ENCODE measurements at regions of chr7 and their contacts with region 1.

Region 1: DNA sequence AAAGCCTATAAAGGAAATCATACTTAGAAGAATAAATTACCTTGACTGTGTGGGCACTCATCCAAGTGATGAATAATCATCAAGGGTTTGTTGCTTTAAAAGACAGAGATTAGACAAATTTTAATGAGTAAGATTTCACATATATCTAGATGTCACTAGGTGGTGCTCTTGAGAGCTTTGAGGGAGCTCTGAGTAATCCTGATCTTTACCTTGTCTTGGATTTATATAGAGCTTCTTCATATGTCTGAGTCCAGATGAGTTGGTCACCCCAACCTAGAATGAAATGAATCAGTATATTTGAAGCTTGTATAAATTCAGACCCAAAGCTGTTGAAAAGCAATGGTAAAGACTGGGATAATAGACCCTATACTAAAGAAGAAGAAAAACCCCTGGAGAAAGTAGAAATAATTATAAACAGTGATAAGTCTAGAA is 3.7 kb downstream of the AGR2 start:
- DNase-seq: no peak
- ATAC-seq: peak; percentile 56
- H3K4me3 Mint-ChIP-seq: no peak overlapping the region
- H3K27ac Mint-ChIP-seq: no peak overlapping the region
- H3K4me1 Mint-ChIP-seq: peaks cover 4% of the 10 kb centered on the region
- H3K27me3 Mint-ChIP-seq: no peaks in the 10 kb centered on the region
- CTCF ChIP-seq: no peak

Region 2: DNA sequence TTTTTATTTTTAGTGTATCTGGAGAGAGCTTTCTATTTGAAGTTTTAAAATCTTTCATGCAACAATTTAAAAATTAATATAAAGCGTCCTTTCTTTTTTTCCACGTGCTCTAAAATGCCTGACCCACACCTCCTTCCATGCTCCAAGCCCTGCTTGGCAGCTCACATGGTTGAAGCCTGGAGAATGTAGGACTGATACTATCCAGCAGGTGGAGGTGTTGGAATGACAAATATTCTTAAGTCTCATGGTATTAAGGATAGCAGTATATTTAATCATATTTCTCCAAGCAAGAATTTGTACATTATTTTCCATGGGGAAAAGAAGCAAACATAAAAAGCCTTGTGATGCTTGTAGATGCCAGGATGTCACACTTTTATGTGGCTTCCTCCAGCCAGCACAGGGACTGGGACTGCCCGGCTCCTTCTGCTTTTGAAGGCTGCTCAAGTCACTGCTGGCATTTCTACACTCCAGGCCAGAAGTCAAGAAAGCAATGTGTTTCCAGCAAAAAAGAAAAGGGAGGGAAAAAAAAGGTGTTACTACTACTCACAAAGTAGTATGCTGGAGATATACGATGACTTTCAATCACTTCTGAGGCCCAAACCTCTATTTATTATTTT is 105.4 kb before region 1 on chr7:
- CTCF ChIA-PET with region 1: interaction called, 3 read pairs
- POLR2A ChIA-PET with region 1: no interaction called
- intact Hi-C with region 1: loop called (anchors 2 kb)
- DNase-seq: no peak
- ATAC-seq: peak; percentile 49
- H3K4me3 Mint-ChIP-seq: no peak overlapping the region
- H3K27ac Mint-ChIP-seq: no peak overlapping the region
- H3K4me1 Mint-ChIP-seq: no peaks in the 10 kb centered on the region
- H3K27me3 Mint-ChIP-seq: no peaks in the 10 kb centered on the region
- CTCF ChIP-seq: no peak

Region 3: DNA sequence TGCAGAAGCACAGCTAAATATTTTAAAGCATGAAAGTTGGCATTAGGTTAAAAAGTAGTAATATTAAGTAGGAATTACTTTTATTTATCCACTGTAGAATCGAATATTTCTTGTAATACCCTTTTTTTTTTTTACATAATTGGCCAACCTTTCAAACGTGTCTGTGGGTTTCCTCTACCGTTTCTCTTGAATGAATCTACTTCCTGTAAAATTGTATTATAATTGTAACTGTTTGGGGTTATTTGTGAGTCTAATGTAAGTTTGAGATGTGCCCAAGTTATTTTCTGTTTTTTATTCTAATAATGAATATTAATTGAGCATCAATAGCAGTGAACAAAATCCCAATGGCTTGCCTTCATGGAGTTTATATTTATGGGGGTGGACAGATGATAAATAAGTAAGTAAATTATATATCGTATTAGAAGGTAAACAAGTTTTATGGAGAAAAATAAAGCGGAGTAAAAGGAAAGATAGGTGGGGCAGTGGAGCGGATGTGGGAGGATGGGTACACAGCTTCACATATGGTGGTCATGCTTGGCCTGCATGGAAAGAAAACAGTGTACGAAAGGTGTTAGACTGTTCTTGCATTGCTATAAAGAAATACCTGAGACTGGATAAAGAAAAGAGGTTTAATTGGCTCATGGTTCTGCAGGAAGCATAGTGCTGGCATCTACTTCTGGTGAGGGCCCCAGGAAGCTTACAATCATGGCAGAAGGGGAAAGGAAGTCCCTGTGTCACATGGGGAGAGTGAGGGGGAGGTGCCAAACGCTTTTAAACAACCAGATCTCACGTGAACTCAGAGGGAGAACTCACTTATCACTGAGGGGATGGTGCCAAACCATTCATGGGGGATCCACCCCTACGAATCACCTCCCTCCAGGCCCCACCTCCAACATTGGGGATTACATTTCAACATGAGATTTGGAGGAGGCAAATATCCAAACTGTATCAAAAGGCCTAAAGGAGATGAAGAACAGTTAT is 42.2 kb before region 1 on chr7:
- CTCF ChIA-PET with region 1: interaction called, 5 read pairs
- POLR2A ChIA-PET with region 1: interaction called, 5 read pairs
- intact Hi-C with region 1: loop called (anchors 2 kb)
- DNase-seq: no peak
- ATAC-seq: peak; percentile 40
- H3K4me3 Mint-ChIP-seq: peak overlapping the region; percentile 75
- H3K27ac Mint-ChIP-seq: peak overlapping the region; percentile 92
- H3K4me1 Mint-ChIP-seq: peaks cover 93% of the 10 kb centered on the region
- H3K27me3 Mint-ChIP-seq: no peaks in the 10 kb centered on the region
- CTCF ChIP-seq: no peak

Region 4: DNA sequence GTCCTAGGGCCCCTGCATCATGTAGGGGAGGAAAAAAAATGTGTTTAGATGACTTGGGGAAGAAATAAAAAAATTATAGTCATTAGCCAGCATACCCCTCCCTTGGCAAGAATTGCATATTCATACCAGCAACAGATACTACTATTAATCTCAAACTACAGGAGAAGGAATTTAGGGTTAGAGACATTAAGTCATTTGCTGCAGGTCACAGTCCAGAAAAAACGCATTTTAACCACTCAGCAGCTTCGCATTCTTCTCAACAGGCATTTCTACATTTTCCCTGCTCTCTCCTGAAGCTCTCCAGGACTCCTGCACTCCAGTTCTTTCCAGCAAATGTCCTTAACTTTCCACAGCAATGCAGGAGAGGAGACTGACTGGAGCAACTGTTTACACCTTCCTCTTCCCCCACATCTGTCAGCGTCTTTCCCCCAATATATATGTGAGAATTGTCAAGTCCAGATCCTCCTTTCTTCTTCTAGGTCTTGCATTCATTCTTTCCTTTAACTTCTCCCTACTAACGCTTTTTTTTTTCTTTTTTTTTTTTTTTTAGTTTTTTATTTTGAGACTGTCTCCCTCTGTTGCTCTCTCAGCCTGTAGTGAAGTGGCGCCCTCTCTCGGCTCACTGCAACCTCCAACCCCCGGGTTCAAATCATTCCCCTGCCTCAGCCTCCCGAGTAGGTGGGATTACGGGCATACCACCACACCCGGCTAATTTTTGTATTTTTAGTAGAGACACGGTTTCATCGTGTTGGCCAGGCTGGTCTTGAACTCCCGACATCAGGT is 1190.9 kb after region 1 on chr7:
- CTCF ChIA-PET with region 1: no interaction called
- POLR2A ChIA-PET with region 1: no interaction called
- intact Hi-C with region 1: no loop called
- DNase-seq: no peak
- ATAC-seq: no peak
- H3K4me3 Mint-ChIP-seq: no peak overlapping the region
- H3K27ac Mint-ChIP-seq: no peak overlapping the region
- H3K4me1 Mint-ChIP-seq: no peaks in the 10 kb centered on the region
- H3K27me3 Mint-ChIP-seq: peaks cover 2% of the 10 kb centered on the region
- CTCF ChIP-seq: no peak